ENCODE measurements at regions of chr10 and their contacts with region 1.

Region 1: GRCh38 chr10:116476461-116476860 is 48.8 kb downstream of the PNLIPRP3 start:
- DNase-seq: no peak
- H3K4me3 ChIP-seq: no peak overlapping the region
- H3K27ac ChIP-seq: no peak overlapping the region
- H3K4me1 ChIP-seq: no peaks in the 10 kb centered on the region
- H3K27me3 ChIP-seq: no peaks in the 10 kb centered on the region
- CTCF ChIP-seq: no peak
- EP300 ChIP-seq: no peak
- RAD21 ChIP-seq: no peak

Region 2: GRCh38 chr10:115525141-115525540 is 951.3 kb before region 1 on chr10:
- CTCF ChIA-PET with region 1: no interaction called
- POLR2A ChIA-PET with region 1: no interaction called
- DNase-seq: no peak
- H3K4me3 ChIP-seq: no peak overlapping the region
- H3K27ac ChIP-seq: no peak overlapping the region
- H3K4me1 ChIP-seq: no peaks in the 10 kb centered on the region
- H3K27me3 ChIP-seq: no peaks in the 10 kb centered on the region
- CTCF ChIP-seq: no peak
- EP300 ChIP-seq: no peak
- RAD21 ChIP-seq: no peak

Region 3: GRCh38 chr10:116490028-116490662 is 13.7 kb after region 1 on chr10:
- CTCF ChIA-PET with region 1: interaction called, 13 read pairs
- POLR2A ChIA-PET with region 1: no interaction called
- DNase-seq: peak; percentile 47
- H3K4me3 ChIP-seq: no peak overlapping the region; a peak in 1 of 4 replicates
- H3K27ac ChIP-seq: no peak overlapping the region
- H3K4me1 ChIP-seq: no peaks in the 10 kb centered on the region
- H3K27me3 ChIP-seq: no peaks in the 10 kb centered on the region
- CTCF ChIP-seq: peak; percentile 87
- EP300 ChIP-seq: no peak
- RAD21 ChIP-seq: peak; percentile 56